Right ventricle myocardium inferior (tissue), 1 donor: ENCODE measurements at regions of chr4 and their contacts with region 1.

Region 1: GRCh38 chr4:184649026-184649970 is at the starts of genes CASP3 and PRIMPOL:
- DNase-seq: peak; percentile 99
- ATAC-seq: peak; percentile 98
- total RNA-seq, gene CASP3: 10.4 TPM
- total RNA-seq, gene PRIMPOL: 10.8 TPM

Region 2: DNA sequence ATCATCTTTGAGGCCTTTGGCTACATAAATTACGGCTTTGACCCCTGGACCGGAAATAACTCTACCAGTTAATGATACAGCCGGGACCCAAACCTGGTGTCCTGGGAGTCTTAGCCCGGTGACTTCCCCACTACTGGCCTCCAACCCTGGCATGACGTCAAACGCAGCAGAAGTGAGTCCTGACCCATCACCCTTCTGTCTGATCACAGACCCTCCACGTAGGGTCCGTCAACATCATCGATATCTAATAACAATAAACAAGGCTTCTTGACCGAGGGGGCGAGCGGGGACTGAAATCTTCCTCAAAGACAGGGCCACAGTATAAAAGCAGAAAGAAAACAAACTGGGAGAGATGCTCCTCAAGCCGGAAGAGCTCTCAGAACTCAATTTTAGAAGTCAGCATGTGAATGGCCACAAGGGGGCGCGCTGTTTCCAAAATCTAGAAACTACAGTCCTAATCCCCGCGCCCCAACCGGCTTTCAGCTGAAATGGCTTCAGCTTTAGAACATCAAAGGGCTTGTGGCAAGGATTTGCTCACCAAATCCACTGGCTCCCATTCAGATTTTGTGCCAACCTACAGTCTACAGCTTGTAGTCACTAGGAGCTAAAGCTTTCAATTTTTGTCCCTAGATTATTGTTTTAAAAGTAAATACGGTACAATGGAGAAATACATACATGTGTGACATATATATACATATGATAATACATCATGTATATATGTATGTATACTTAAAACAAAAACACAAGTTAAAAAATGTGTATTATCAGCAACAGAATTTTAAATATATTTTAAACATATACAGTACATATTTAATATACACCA is 385.2 kb before region 1 on chr4:
- intact Hi-C with region 1: loop called (anchors 5 kb)
- DNase-seq: peak; percentile 96
- ATAC-seq: peak; percentile 82

Region 3: GRCh38 chr4:184384056-184384809 is 265.1 kb before region 1 on chr4:
- intact Hi-C with region 1: loop called (anchors 2 kb)
- DNase-seq: peak; percentile 60
- ATAC-seq: peak; percentile 58

Region 4: DNA sequence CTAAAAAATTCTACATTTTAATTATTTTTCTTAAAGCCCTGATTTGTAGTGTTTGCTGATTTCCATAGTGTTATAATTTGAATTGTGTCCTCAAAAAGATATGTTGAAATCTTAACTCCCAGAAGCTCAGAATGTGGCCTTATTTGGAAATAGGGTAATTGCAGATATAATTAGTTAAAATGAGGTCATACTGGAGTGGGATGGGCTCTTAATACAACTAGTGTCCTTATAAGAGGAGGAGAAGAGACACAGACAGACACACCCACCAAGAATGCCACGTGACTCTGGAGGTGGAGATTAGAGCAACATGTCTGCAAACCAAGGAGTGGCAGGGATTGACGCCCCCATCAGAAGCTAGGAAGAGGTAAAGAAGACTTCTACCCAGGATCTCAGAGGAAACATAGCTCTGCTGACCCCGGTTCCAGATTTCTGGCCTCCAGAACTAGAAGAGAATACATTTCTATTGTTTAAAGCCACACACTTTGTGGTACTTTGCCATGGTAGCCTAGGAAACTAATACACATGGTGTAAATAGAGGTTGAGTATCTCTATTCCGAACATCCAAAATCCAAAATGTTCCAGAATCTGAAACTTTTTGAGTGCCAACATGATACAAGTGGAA is 104.4 kb before region 1 on chr4:
- intact Hi-C with region 1: no loop called
- DNase-seq: no peak
- ATAC-seq: no peak

Region 5: DNA sequence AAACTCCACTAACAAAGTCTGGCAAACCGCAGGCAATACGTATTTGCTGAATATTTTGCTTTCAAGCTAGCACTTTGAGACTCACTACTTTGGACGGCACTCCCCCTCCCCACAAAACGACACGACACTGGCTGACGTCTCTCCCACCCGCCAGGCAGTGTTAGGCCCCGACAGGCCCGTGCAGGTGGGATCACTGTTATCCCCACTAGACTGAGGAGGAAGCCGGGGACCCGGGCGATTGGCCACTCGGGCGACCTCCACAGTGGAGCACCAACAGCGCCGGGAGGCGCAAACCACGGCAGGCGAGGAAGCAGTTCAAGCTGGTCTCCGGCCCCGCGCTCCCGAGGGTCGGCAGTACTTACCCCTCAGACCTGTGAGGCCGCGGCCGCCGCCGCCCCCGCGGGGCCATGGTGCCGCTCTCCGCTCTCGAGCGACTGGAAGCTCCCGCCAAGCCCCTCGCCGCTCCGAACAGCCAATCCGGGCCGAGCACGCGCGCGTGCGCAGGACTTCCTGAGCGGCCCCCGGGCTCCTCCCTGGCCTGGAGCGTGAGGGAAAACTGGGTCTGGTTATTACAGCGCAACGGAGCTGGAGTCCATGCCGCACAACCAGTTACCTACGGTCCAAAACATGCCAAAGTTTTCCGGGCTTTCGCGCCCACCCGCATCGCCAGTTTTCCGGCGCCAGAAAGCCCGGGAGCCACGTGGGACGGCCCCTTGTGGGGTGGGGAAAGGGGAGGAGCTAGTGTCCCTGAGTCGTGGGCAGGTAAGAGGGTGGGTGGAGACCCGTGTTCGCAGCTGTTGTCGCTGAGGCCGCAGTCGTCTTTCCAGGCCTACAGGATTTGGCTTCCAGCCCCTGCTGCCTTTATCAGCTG is 84.6 kb after region 1 on chr4 and contains the start of gene CENPU:
- intact Hi-C with region 1: loop called (anchors 2 kb)
- DNase-seq: peak; percentile 96
- ATAC-seq: peak; percentile 100
- total RNA-seq, gene CENPU: 1.8 TPM

Region 6: DNA sequence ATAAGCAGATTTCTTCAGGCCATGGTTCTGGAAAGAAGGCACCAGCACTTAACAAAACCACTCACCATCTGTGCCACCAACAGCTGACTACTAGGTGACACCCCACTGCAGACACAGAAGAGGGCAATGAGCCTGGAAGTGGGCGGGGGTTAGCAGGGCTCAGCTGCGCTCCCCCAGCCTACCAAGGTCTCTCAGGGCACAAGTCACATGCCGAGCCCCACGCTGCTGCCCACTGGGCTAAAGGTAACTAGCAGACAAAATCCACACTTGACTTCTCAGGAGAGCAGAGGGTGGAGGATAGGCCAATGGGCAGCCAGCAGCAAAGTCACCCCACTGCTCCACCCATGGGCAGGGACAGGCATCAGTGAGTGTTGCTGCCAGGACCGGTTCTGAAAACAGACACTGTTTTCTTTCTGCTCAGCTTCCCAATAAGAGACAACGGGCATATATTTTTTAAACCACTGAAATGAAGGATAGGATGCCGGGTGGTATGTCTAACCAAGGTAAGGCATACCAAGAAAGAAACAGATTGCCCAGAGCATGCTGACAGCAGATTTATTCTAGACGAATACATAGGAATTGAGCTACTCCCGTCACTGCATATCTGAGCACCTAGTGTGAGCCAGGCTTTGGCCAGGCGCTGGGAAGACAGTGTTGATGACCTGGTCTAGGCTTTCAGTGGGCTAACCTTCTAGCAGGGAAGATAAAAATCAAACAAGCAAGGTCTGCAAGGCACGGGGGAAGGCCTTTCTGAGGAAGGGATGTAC is 156.3 kb after region 1 on chr4:
- intact Hi-C with region 1: no loop called
- DNase-seq: peak; percentile 90
- ATAC-seq: peak; percentile 92